Activated CD4-positive, alpha-beta T cell treated with anti-CD3 and anti-CD28 coated beads for 36 hours (primary cell): ENCODE measurements at regions of chr1 and their contacts with region 1.

Region 1: GRCh38 chr1:153977250-153978240 is at the start of gene JTB:
- DNase-seq: peak; percentile 94
- ATAC-seq: peak; percentile 95
- H3K4me3 Mint-ChIP-seq: peak within 1 kb of the TSS; percentile 97
- H3K27ac Mint-ChIP-seq: peak within 1 kb of the TSS; percentile 97
- H3K4me1 Mint-ChIP-seq: peaks cover 33% of the 10 kb centered on the region
- H3K27me3 Mint-ChIP-seq: no peaks in the 10 kb centered on the region
- total RNA-seq, gene JTB: 107 to 145 TPM

Region 2: DNA sequence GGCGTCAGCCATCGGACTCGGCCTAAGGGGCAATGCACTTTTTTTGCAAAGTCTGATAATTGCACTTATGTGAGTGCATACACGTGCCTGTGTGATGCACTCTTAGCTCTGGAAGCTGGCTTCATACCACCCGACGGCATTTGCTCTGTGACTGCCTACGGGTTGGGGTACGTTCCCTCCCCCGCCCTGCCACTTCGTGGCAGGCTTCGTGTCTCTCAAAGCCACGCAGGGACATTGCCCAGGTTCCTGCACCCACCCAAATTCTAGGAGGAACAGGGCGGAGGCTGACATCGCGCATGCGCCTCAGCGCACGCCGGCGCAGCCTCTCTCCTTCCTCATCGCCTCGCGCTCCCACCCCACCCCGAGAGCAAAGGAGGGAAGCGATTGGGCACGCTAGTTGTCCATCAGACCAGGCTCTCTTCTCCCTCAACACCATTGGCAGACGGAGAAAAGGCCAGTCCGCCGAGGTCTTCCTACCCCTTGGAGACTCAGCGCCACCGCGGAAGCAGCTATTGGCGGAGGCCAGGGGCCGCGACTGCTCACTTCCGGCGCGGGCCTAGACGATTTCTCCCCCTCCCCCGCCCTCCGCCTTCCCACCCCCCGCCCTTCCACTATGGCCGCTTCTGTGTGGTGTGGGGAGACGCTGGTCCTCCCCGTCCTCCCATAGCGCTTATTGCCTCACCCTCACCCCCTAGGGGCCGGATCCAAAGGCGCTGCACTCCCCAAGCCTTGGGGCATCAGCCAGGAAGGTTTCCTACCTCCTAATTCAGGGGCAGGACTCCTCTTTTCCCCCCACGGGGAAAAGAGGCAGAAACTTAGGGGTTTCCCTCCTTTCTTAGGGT is 249.9 kb before region 1 on chr1 and contains the start of gene INTS3:
- CTCF ChIA-PET with region 1: no interaction called
- POLR2A ChIA-PET with region 1: interaction called, 3 read pairs
- intact Hi-C with region 1: loop called in 1 of 2 experiments (anchors 5 kb)
- DNase-seq: peak; percentile 99
- ATAC-seq: peak; percentile 99
- H3K4me3 Mint-ChIP-seq: peak within 1 kb of the TSS; percentile 93
- H3K27ac Mint-ChIP-seq: peak within 1 kb of the TSS; percentile 95
- H3K4me1 Mint-ChIP-seq: peaks cover 44% of the 10 kb centered on the region
- H3K27me3 Mint-ChIP-seq: no peaks in the 10 kb centered on the region
- total RNA-seq, gene INTS3: 52.0 to 58.0 TPM

Region 3: DNA sequence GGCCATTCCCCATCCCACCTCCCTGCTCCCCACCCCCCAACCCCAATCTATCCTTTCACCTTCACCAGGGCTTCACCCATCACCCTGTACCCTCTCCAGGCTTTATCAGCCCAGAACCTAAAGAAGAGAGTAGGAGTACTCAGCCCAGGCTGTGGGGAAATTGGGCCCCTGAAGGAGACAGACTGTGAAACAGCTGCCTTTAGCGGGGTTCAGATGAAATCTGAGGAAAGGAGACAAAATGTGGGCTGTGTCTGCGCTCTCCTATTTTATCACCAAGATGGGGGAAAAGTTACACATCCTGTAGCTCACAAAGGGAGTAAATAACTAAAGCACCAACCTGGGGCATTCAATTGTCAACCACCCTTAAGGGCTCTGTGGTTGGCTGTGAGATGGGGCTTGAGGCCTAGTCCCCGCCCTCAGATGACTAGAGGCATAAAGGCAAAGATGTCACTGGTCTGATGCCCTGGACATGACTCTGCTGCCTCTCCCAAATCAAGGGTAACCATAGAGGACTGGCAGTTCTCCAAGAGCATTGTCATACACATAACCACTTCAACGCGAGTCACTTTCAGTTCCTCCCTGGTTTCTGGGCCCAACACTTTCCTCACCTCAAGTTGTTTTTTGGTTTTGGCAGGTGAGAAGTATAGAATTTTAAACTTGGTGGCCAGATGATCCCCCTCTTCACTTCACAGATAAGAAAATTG is 172.4 kb before region 1 on chr1:
- CTCF ChIA-PET with region 1: no interaction called
- POLR2A ChIA-PET with region 1: no interaction called
- intact Hi-C with region 1: loop called in 1 of 2 experiments (anchors 1 kb)
- DNase-seq: peak; percentile 87
- ATAC-seq: peak; percentile 98
- H3K4me3 Mint-ChIP-seq: peak overlapping the region; percentile 28
- H3K27ac Mint-ChIP-seq: peak overlapping the region; percentile 85
- H3K4me1 Mint-ChIP-seq: peaks cover 30% of the 10 kb centered on the region
- H3K27me3 Mint-ChIP-seq: no peaks in the 10 kb centered on the region

Region 4: GRCh38 chr1:153880962-153881361 is 96.6 kb before region 1 on chr1:
- CTCF ChIA-PET with region 1: no interaction called
- POLR2A ChIA-PET with region 1: no interaction called
- intact Hi-C with region 1: no loop called
- DNase-seq: peak; percentile 67
- ATAC-seq: peak; percentile 66
- H3K4me3 Mint-ChIP-seq: no peak overlapping the region
- H3K27ac Mint-ChIP-seq: no peak overlapping the region
- H3K4me1 Mint-ChIP-seq: peaks cover 16% of the 10 kb centered on the region
- H3K27me3 Mint-ChIP-seq: no peaks in the 10 kb centered on the region

Region 5: DNA sequence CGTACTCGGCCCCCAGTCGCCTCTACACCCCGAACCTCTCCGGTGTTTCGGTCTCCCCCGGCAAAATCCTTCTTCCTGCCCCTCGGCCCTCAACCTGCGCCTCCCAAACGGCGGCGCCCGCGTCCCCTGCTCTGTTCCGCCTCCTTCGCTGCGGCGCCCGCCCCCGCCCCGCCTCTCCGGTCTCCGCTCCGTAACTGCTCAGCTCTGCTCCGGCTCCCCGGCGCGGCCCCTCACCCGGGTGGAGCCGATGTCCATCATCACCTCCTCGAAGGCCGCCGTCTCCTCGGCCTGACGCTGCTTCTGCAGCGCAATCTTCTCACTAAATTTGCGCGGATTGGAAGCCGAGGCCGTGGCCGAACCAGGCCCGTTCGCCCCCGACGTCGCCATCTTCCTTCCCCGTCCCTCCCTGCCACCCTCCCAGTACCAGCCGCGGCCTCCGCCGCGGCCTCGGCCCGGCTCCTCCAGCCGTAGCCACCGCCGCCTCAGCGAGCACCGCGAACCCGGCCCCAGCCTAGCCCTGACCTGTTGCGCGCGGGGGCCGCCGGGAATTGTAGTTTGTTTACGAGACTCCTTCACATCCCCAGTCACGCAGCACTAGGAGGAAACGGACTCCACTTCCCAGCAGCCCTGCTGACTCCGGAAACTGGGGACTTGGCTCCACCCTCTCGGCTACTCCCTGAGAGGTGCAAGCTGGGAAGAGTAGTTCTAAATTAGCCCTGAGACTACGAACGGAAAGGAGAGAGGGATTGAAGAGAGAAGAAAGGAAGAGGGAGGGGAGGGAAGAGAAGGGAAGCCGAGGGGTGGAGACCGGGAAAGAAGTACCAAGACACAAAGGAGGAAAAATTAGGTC is 19.2 kb before region 1 on chr1 and contains the start of gene CRTC2:
- CTCF ChIA-PET with region 1: interaction called, 26 read pairs
- POLR2A ChIA-PET with region 1: interaction called, 8 read pairs
- intact Hi-C with region 1: loop called (anchors 1 kb)
- DNase-seq: peak; percentile 99
- ATAC-seq: peak; percentile 90
- H3K4me3 Mint-ChIP-seq: peak within 1 kb of the TSS; percentile 99
- H3K27ac Mint-ChIP-seq: peak within 1 kb of the TSS; percentile 95
- H3K4me1 Mint-ChIP-seq: peaks cover 55% of the 10 kb centered on the region
- H3K27me3 Mint-ChIP-seq: no peaks in the 10 kb centered on the region
- total RNA-seq, gene CRTC2: 60.6 to 80.4 TPM

Region 6: DNA sequence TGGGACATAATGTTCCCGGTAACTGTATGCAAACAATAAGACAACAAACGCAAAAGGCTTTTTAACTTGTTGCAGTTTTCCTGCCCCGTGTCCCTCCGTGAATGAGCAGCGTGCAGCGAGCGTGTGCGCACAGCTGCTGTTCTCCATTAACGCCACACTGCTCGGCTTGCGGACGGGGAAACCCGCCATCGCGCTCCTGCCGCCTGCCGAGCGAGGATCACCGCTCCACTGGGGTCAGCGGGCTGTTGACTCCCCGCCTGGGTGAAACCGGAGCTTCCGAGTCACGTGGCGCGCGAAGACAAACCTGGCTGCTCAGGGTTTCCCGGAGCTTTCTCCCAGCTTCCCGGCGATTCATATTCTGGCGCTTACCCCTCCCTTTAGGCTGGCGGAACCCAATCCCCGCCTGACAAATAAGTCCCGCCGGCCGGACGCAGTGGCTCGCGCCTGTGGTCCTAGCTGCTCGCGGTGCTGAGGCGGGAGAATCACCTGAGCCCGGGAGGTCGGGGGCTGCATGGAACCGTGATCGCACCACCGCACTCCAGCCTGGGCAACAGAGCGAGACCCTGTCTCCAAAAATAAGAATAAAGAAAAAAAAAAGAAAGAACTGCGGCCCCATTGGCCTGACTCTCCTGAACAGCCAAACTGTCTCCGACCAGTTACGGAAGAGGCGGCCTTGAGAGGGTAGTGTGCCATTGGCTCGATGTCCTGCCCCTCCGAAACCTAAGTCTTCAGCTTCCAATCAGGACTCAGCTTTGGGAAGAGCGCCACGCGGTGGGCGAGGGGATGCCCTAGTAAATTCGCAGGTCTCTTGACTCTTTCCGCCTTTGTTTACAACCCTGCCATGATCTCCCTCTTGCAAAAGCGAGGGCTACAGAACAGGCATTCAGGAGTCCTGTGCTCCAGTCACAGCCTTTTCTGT is 10.2 kb before region 1 on chr1 and contains the start of gene CREB3L4:
- CTCF ChIA-PET with region 1: interaction called, 36 read pairs
- POLR2A ChIA-PET with region 1: interaction called, 49 read pairs
- intact Hi-C with region 1: loop called (anchors 1 kb)
- DNase-seq: peak; percentile 91
- ATAC-seq: peak; percentile 87
- H3K4me3 Mint-ChIP-seq: peak within 1 kb of the TSS; percentile 96
- H3K27ac Mint-ChIP-seq: peak within 1 kb of the TSS; percentile 96
- H3K4me1 Mint-ChIP-seq: peaks cover 38% of the 10 kb centered on the region
- H3K27me3 Mint-ChIP-seq: no peaks in the 10 kb centered on the region
- total RNA-seq, gene CREB3L4: 8.5 to 9.1 TPM